ENCODE measurements at regions of chr4 and their contacts with region 1.

Region 1: DNA sequence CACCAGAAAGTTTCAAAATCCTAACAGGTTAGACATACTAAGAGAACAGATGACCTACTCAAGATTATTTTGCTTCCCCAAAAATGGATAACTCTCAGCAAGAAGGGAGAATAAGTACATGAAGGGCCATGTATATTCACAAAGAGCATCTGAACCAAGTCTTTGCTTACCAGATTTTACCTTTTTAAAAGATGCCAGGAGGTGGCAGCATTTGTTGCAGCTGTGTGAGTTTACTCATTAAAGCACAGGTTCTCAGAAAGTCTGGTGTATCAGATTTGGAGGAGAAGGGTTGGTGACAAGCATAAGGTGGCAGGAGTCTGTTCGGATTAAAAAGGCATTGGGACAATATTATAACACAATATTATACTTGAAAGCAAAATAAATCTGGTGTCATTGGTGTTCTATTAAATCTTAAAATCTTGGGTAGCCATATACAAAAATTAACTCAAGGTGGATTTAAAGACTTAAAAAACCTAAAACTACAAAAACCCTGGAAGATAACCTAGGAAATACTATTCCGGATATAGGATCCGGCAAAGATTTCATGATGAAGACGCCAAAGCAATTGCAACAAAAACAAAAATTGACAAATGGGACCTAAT is 51.3 kb upstream of the NFKB1 start:
- DNase-seq: peak in 1 of 3 donors; percentile 80
- ATAC-seq: peak; percentile 85
- H3K4me3 ChIP-seq: no peak overlapping the region
- H3K4me1 ChIP-seq: peaks cover 4% of the 10 kb centered on the region
- CTCF ChIP-seq: peak; percentile 13

Region 2: DNA sequence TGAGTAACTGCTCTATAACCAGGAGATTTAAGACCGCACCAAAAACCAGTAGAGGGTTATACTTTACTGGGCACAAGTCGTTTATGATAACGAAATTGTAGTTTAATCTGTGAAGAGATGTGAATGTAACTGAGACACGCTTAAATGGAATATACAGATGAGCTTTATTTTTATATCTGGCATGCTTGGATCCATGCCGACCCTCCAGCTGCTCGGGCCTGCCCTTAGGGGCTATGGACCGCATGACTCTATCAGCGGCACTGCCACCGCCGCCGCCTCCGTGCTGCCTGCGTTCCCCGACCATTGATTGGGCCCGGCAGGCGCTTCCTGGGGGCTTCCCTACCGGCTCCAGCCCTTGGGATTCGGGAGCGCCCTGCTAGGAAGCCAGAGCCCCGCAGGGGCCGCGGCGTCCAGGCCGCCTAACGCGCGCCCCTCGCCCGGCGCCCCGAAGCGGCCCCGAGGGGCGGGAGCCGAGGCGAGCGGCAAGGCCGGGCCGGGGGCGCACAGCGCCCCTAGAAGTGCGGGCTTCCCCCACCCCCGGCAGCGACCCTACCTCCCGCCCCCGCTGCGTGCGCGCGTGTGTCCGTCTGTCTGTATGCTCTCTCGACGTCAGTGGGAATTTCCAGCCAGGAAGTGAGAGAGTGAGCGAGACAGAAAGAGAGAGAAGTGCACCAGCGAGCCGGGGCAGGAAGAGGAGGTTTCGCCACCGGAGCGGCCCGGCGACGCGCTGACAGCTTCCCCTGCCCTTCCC is 51.0 kb after region 1 on chr4 and contains the start of gene NFKB1:
- intact Hi-C with region 1: loop called in 1 of 2 experiments (anchors 10 kb)
- DNase-seq: peak; percentile 75 to 81 (median 77)
- ATAC-seq: peak; percentile 64
- H3K4me3 ChIP-seq: peak within 1 kb of the TSS; percentile 85
- H3K4me1 ChIP-seq: peaks cover 20% of the 10 kb centered on the region
- CTCF ChIP-seq: no peak
- total RNA-seq, gene NFKB1: 50.8 to 57.4 (median 53.6) TPM

Region 3: DNA sequence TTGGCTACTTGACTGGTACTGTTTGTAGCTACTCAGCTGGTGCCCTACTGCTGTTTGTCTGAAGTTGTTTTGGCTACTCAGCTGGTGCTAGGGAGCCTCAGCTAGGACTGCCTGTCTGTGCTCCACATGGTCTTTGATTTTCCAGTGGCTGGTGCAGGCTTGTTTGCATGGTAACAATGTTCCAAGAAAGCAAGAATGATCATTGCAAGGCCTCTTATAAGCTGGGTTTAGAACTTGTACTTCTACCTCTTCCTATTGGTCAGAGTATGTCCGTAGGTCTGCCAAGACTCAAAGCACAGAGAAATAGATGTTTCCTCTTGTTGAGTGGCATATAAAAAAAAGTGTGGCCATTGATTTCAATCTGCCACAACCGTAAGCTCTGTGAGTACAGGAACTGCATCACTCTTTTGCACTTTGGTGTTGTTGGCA is 68.9 kb after region 1 on chr4:
- intact Hi-C with region 1: no loop called
- DNase-seq: no peak
- ATAC-seq: peak; percentile 33
- H3K4me3 ChIP-seq: no peak overlapping the region
- H3K4me1 ChIP-seq: no peaks in the 10 kb centered on the region
- CTCF ChIP-seq: no peak

Region 4: GRCh38 chr4:102610007-102610406 is 160.2 kb after region 1 on chr4:
- intact Hi-C with region 1: loop called (anchors 10 kb)
- DNase-seq: no peak
- ATAC-seq: no peak
- H3K4me3 ChIP-seq: no peak overlapping the region
- H3K4me1 ChIP-seq: peaks cover 5% of the 10 kb centered on the region
- CTCF ChIP-seq: no peak

Region 5: GRCh38 chr4:103008875-103009729 is 559.2 kb after region 1 on chr4:
- intact Hi-C with region 1: loop called (anchors 10 kb)
- DNase-seq: peak in 2 of 3 donors; percentile 19 to 69
- ATAC-seq: peak; percentile 77
- H3K4me3 ChIP-seq: no peak overlapping the region
- H3K4me1 ChIP-seq: peaks cover 16% of the 10 kb centered on the region
- CTCF ChIP-seq: peak; percentile 39

Region 6: DNA sequence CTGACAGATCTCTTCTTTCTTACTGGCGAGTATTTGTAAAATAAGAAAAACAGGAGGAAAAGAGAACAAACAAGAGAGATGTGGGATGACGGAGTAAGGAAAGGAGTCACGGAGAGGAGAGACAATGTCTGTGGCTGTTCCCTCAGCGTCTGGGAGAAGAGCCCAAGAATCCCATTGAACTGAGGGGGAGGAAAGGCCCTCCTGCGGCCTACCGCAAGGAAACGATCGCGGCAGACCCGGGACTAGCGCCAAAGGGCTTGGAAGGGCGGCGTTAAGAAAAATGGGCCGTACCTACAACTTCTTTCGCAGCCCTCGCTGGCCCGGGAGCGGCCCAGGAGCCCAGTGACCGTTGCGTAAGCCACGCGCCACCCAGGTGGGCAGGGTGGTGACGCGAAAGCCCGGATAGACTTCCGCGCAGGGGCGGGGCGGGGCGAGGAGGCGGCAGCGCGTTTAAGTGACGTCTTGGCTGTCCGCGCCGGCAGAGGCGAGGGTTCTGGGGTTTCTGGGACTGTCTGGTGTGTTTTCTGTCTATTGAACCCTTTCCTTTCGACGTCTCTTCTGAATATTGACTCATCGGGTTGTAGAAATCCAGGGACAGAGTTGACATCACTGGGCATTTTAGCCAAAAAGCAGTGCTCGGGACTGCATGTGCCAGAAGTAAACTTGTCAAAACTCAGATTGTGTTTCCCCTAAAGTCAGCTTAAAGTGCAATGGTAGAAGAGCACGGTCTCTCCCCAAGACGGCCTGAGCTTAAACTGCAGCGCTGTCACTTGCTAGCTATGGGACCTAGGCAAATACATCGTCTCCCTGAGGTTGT is 569.7 kb after region 1 on chr4 and contains the start of gene SLC9B1:
- intact Hi-C with region 1: loop called in 1 of 2 experiments (anchors 10 kb)
- DNase-seq: peak; percentile 98
- ATAC-seq: peak; percentile 100
- H3K4me3 ChIP-seq: no peak within 1 kb of the TSS
- H3K4me1 ChIP-seq: peaks cover 8% of the 10 kb centered on the region
- CTCF ChIP-seq: no peak
- total RNA-seq, gene SLC9B1: 0.65 to 1.4 TPM in 2 of 3 donors, not detected in the other

Measured in mucosa of descending colon (tissue), 3 donors.